Activated CD4-positive, alpha-beta T cell treated with anti-CD3 and anti-CD28 coated beads for 36 hours (primary cell): ENCODE measurements at regions of chr2 and their contacts with region 1.

Region 1: DNA sequence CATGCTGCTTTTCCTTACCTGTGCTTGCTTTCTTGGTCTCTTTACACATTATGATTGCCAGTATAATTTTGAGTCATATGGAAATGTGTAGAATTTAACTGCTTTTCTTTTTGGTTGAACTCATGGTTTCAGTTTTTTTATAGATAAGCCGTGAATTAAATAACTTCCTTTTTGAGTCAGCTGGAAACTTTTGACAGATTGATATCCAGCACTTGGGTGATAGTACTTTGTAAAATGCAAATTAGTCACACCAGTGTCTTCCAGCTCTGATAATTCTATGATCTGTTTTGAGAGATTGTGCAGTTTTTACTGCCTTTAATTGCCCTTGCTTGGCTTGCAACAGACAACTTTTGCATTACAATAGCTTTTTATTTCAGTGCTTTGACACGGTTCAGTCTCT is 86.4 kb downstream of the NCOA1 start:
- DNase-seq: no peak
- ATAC-seq: peak; percentile 76
- H3K4me3 Mint-ChIP-seq: peak overlapping the region; percentile 3
- H3K27ac Mint-ChIP-seq: peak overlapping the region; percentile 79
- H3K4me1 Mint-ChIP-seq: peaks cover 76% of the 10 kb centered on the region
- H3K27me3 Mint-ChIP-seq: no peaks in the 10 kb centered on the region

Region 2: GRCh38 chr2:24315669-24316068 is 261.8 kb before region 1 on chr2:
- CTCF ChIA-PET with region 1: no interaction called
- POLR2A ChIA-PET with region 1: no interaction called
- intact Hi-C with region 1: loop called in 1 of 2 experiments (anchors 2 kb)
- DNase-seq: peak; percentile 34
- ATAC-seq: peak; percentile 79
- H3K4me3 Mint-ChIP-seq: no peak overlapping the region
- H3K27ac Mint-ChIP-seq: peak overlapping the region; percentile 30
- H3K4me1 Mint-ChIP-seq: peaks cover 35% of the 10 kb centered on the region
- H3K27me3 Mint-ChIP-seq: no peaks in the 10 kb centered on the region

Region 3: DNA sequence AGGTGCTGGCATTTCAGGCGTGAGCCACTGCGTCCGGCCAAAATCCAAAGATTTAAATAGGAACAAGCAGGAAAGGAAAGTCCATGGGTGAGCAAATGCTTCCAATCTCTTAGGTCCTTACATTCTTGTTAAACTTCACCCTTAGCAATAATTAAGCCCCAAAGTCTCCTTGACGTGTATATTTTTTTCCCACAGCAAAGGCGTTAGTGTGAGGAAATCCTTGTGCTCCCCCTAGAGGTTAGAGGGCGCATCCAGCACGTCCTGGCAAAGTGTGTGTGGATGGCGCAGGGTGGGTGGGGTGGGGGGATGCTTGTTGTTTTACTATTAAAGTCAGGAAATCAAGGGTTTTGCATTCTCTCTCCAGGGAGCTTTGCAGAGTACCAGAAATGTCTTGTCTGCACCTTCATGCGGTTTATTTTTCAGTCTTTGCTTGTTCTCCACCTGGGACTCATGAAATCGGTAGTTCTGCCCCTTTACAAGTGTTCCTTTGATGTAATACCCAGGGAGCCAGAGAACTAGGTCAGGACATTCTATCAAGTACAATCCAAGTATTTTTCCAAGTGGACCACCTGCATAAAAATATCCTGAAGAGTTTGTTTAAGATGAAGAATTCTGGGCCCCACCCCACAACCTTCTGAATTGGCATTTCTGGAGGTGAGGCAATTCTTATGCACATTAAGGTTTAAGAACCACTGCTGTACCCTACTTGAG is 195.0 kb before region 1 on chr2:
- CTCF ChIA-PET with region 1: no interaction called
- POLR2A ChIA-PET with region 1: no interaction called
- intact Hi-C with region 1: no loop called
- DNase-seq: peak; percentile 74
- ATAC-seq: peak; percentile 97
- H3K4me3 Mint-ChIP-seq: no peak overlapping the region
- H3K27ac Mint-ChIP-seq: no peak overlapping the region
- H3K4me1 Mint-ChIP-seq: no peaks in the 10 kb centered on the region
- H3K27me3 Mint-ChIP-seq: no peaks in the 10 kb centered on the region

Region 4: DNA sequence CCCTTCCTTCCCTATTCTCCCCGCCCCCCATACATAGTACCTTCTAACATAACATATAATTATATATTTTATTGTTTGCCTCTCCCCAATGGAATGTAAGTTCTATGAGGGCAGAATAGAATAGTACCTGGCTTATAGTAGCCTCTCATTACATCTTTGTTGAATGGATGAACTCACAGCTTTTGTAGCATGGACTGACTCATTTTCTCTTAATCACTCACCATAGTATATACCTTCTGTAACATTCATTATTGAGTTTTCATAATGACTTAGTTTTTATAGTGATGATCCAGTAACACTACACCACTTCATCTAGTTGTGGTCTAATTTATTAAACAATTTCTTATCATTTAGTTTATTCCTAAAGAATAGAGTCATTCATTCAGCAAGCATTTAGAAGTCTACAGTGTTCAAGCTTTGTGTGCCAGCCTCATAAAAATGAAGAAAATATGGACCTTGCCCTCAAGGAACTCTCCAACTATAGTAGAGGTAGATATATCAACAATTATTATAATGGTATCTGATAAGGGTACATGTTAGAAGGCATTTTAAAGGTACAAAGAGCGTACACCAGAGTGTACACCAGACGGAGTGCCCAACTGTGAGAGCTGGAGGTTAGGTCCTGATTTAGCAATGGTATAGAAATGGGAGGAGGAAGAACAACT is 55.4 kb before region 1 on chr2:
- CTCF ChIA-PET with region 1: interaction called, 7 read pairs
- POLR2A ChIA-PET with region 1: interaction called, 4 read pairs
- intact Hi-C with region 1: loop called (anchors 1 kb)
- DNase-seq: no peak
- ATAC-seq: peak; percentile 93
- H3K4me3 Mint-ChIP-seq: peak overlapping the region; percentile 51
- H3K27ac Mint-ChIP-seq: peak overlapping the region; percentile 90
- H3K4me1 Mint-ChIP-seq: peaks cover 48% of the 10 kb centered on the region
- H3K27me3 Mint-ChIP-seq: no peaks in the 10 kb centered on the region

Region 5: DNA sequence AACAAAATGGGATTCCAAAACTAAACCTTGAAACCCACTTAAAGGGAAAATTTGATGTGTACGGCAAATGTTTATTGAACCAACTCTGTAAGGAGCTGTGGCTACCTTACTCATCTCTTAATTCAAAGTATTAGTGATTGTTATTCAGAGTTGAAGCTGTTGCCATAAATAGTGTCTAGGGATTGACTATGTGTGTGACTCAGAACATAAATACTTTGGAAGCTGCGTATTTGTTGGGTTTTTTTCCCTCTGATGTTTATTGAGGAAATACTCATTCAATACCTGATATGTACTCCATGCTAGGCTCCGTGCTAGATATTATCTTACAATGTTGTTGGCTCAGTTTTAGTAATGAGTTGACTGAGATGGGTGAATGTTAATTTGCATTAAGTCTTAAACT is 125.3 kb after region 1 on chr2:
- CTCF ChIA-PET with region 1: no interaction called
- POLR2A ChIA-PET with region 1: interaction called, 3 read pairs
- intact Hi-C with region 1: loop called (anchors 2 to 5 kb)
- DNase-seq: no peak
- ATAC-seq: peak; percentile 77
- H3K4me3 Mint-ChIP-seq: no peak overlapping the region
- H3K27ac Mint-ChIP-seq: peak overlapping the region; percentile 59
- H3K4me1 Mint-ChIP-seq: peaks cover 13% of the 10 kb centered on the region
- H3K27me3 Mint-ChIP-seq: no peaks in the 10 kb centered on the region